PC-9 (cell line): ENCODE measurements at regions of chr17 and their contacts with region 1.

Region 1: GRCh38 chr17:71203953-71204352 is 916.9 kb upstream of the SOX9 start:
- DNase-seq: no peak
- H3K4me3 ChIP-seq: no peak overlapping the region
- H3K27ac ChIP-seq: no peak overlapping the region
- H3K4me1 ChIP-seq: no peaks in the 10 kb centered on the region
- H3K27me3 ChIP-seq: no peaks in the 10 kb centered on the region
- CTCF ChIP-seq: no peak

Region 2: DNA sequence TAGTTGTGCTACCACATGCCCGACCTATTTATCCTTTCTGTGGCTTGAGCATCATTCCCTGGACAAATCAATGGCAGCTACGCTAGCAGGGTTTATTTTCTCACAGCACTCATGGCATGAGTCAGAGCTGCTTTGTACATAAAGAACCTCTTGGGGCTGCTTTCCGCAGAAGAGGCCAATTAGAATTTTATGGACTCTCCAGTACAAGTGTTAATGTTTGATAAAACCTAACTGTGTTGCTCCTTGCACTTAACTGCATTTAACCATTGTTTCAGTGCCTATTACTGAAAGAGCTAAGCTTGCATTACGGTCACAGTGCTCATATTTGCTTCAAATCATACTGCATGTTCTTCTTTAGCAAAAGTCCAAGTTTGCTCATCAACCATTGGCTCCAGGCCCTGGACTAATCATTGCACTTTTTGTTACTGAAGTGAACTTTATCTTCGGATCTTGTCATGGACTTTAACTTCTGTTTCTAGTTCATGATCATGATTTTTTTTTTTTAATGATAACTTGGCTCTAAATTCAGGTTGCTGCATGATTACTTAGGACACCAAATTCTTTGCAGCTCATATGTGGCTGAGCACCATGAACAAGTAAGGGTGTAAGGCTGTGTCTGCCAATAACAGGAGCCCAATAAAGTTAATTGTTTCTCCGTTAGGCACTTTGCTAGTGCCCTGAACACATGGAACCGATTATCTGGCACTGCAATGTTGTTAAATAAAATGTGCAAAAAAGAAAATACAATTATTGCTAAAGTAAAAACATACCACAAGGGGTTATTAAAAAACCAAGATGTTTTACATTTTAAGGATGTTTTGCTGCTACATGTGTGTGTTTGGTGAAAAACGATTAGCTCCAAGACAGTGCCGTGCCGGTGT is 542.4 kb before region 1 on chr17:
- CTCF ChIA-PET with region 1: no interaction called
- POLR2A ChIA-PET with region 1: interaction called, 13 read pairs
- intact Hi-C with region 1: no loop called
- DNase-seq: no peak
- H3K4me3 ChIP-seq: no peak overlapping the region
- H3K27ac ChIP-seq: no peak overlapping the region
- H3K4me1 ChIP-seq: no peaks in the 10 kb centered on the region
- H3K27me3 ChIP-seq: no peaks in the 10 kb centered on the region
- CTCF ChIP-seq: no peak

Region 3: GRCh38 chr17:71163121-71163812 is 40.7 kb before region 1 on chr17:
- CTCF ChIA-PET with region 1: no interaction called
- POLR2A ChIA-PET with region 1: no interaction called
- intact Hi-C with region 1: loop called (anchors 5 kb)
- DNase-seq: peak; percentile 52 to 85
- H3K4me3 ChIP-seq: no peak overlapping the region
- H3K27ac ChIP-seq: no peak overlapping the region
- H3K4me1 ChIP-seq: no peaks in the 10 kb centered on the region
- H3K27me3 ChIP-seq: no peaks in the 10 kb centered on the region
- CTCF ChIP-seq: no peak

Region 4: DNA sequence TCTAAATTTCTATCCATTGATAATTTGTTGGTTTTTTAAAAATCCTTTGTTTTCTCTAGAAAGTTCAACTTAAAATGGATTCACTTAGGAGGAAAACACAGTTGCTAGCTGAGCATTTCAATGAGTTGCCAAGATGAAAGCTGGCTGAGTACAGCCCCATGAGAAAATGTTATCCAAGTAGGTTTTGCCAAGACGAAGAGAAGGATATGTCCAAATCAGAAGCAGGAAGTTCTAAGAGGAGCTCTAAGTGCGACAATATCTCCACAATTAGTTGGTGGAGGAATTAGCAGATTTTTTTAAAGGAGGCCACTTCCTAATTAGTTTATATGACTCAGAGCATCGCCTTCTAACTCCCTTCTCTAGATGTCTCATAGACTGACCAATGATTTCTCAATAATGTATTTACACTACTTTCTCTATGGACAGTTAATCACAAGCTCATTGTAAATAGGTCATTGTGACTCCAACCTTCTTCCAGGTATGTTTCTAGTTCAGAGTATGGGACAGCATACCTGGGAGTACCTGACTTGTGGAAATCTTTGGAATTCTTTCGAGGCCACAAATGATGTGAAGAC is 43.6 kb after region 1 on chr17:
- CTCF ChIA-PET with region 1: no interaction called
- POLR2A ChIA-PET with region 1: no interaction called
- intact Hi-C with region 1: no loop called
- DNase-seq: no peak
- H3K4me3 ChIP-seq: no peak overlapping the region
- H3K27ac ChIP-seq: no peak overlapping the region
- H3K4me1 ChIP-seq: no peaks in the 10 kb centered on the region
- H3K27me3 ChIP-seq: no peaks in the 10 kb centered on the region
- CTCF ChIP-seq: no peak